Right ventricle myocardium inferior (tissue), 1 donor: ENCODE measurements at regions of chr22 and their contacts with region 1.

Region 1: GRCh38 chr22:35524966-35525686 is 15.5 kb upstream of the RASD2 start:
- DNase-seq: no peak
- ATAC-seq: peak; percentile 60

Region 2: GRCh38 chr22:35479985-35480550 is 45.1 kb before region 1 on chr22:
- intact Hi-C with region 1: loop called (anchors 5 kb)
- DNase-seq: no peak
- ATAC-seq: peak; percentile 44